GM10248 (cell line): ENCODE measurements at regions of chrX and their contacts with region 1.

Region 1: GRCh38 chrX:73855546-73855945 is 292.5 kb downstream of the CHIC1 start:
- DNase-seq: peak; percentile 35
- CTCF ChIP-seq: peak; percentile 67

Region 2: DNA sequence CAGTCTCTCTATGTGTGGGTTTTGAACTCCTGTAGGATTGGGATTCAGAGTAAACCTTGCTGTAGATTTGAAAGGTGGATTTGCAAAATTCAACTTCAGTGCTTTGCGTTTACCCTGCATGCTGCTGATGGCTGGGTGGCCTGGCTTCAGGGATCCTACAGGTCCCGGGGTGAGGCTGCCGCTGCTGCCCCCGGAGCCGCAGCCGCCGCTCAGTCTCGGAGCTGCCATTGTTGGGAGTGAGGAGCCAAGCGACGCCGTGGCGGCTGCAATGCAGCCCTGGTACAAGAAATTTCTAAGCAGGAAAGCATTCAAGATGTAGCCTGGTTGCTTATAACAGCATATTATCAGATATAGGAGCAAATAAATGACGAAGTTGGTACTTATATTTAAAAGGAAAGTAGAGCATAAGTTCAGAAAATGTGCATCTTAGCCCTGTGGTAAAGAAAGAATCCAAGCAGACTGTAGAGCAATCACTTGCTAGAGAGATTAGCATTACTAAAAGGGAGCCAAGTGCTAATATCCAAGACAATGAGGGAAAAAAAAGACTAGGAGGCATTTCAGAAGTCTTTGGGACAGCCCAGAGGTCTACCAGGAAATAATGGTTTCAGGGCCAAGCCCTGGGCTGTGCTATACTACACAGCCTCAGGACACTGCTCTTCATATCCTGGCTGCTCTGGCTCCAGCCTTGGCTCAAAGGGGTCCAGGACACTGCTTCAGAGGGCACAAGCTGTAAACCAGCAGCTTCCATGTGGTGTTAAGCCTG is 329.4 kb before region 1 on chrX:
- CTCF ChIA-PET with region 1: no interaction called
- POLR2A ChIA-PET with region 1: no interaction called
- DNase-seq: no peak
- CTCF ChIP-seq: no peak

Region 3: GRCh38 chrX:73867144-73867543 is 11.6 kb after region 1 on chrX:
- CTCF ChIA-PET with region 1: no interaction called
- POLR2A ChIA-PET with region 1: no interaction called
- DNase-seq: no peak
- CTCF ChIP-seq: no peak

Region 4: GRCh38 chrX:74015379-74016019 is 160.0 kb after region 1 on chrX:
- CTCF ChIA-PET with region 1: interaction called, 12 read pairs
- POLR2A ChIA-PET with region 1: no interaction called
- DNase-seq: peak; percentile 58
- CTCF ChIP-seq: peak; percentile 50